Endothelial cell of umbilical vein (primary cell): ENCODE measurements at regions of chr6 and their contacts with region 1.

Region 1: GRCh38 chr6:4599923-4600322 is 176.3 kb upstream of the CDYL start:
- DNase-seq: peak; percentile 89
- H3K4me3 ChIP-seq: no peak overlapping the region
- H3K27ac ChIP-seq: peak overlapping the region; percentile 81
- H3K4me1 ChIP-seq: peaks cover 24% of the 10 kb centered on the region
- H3K27me3 ChIP-seq: no peaks in the 10 kb centered on the region
- CTCF ChIP-seq: no peak
- POLR2A ChIP-seq: no peak

Region 2: GRCh38 chr6:3194535-3195419 is 1405.1 kb before region 1 on chr6:
- CTCF ChIA-PET with region 1: no interaction called
- POLR2A ChIA-PET with region 1: no interaction called
- dilution Hi-C with region 1: no loop called
- intact Hi-C with region 1: no loop called
- DNase-seq: peak; percentile 74
- H3K4me3 ChIP-seq: no peak overlapping the region
- H3K27ac ChIP-seq: no peak overlapping the region
- H3K4me1 ChIP-seq: peaks cover 7% of the 10 kb centered on the region
- H3K27me3 ChIP-seq: peaks cover 0 to 2% of the 10 kb centered on the region in 2 experiments
- CTCF ChIP-seq: no peak
- POLR2A ChIP-seq: no peak

Region 3: GRCh38 chr6:4581796-4582385 is 18.0 kb before region 1 on chr6:
- CTCF ChIA-PET with region 1: no interaction called
- POLR2A ChIA-PET with region 1: no interaction called
- dilution Hi-C with region 1: no loop called
- intact Hi-C with region 1: loop called (anchors 1 kb)
- DNase-seq: peak; percentile 76
- H3K4me3 ChIP-seq: no peak overlapping the region
- H3K27ac ChIP-seq: peak overlapping the region; percentile 81
- H3K4me1 ChIP-seq: peaks cover 22% of the 10 kb centered on the region
- H3K27me3 ChIP-seq: no peaks in the 10 kb centered on the region
- CTCF ChIP-seq: no peak
- POLR2A ChIP-seq: no peak

Region 4: DNA sequence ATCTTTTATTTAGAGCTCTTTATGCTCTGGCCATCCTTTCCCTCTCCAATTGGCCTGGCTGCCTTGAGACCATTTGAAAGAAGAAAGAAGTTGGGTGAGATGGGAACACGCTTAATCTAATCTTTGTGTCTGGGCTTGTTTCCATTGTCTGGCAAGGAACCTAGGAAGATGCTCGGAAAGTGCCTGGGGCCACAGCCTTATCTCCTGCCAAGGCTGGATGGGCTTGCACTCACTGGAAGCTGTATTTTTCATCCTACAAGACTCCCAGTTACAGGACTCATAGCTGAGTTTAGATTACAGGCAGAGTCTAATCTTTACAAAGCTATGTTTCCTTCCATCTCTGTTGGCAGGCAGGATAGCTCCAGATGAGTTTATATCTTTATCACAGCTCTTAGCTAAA is 143.1 kb after region 1 on chr6:
- CTCF ChIA-PET with region 1: no interaction called
- POLR2A ChIA-PET with region 1: no interaction called
- dilution Hi-C with region 1: no loop called
- intact Hi-C with region 1: no loop called
- DNase-seq: no peak
- H3K4me3 ChIP-seq: no peak overlapping the region
- H3K27ac ChIP-seq: no peak overlapping the region
- H3K4me1 ChIP-seq: no peaks in the 10 kb centered on the region
- H3K27me3 ChIP-seq: peaks cover 4 to 9% of the 10 kb centered on the region in 2 experiments
- CTCF ChIP-seq: no peak
- POLR2A ChIP-seq: no peak